A549 (cell line): ENCODE measurements at regions of chr7 and their contacts with region 1.

Region 1: GRCh38 chr7:80722616-80723141 is 84.2 kb downstream of the CD36 start:
- DNase-seq: peak; percentile 83 to 98
- ATAC-seq: peak; percentile 98 to 99
- H3K4me3 ChIP-seq: peak overlapping the region; percentile 3; the same call in 1 of the 3 replicates
- H3K27ac ChIP-seq: peak overlapping the region; percentile 96 to 98
- H3K4me1 ChIP-seq: peaks cover 53% of the 10 kb centered on the region
- CTCF ChIP-seq: no peak
- EP300 ChIP-seq: peak; percentile 97 to 99
- POLR2A ChIP-seq: no peak
- RAD21 ChIP-seq: peak; percentile 41 to 72

Region 2: DNA sequence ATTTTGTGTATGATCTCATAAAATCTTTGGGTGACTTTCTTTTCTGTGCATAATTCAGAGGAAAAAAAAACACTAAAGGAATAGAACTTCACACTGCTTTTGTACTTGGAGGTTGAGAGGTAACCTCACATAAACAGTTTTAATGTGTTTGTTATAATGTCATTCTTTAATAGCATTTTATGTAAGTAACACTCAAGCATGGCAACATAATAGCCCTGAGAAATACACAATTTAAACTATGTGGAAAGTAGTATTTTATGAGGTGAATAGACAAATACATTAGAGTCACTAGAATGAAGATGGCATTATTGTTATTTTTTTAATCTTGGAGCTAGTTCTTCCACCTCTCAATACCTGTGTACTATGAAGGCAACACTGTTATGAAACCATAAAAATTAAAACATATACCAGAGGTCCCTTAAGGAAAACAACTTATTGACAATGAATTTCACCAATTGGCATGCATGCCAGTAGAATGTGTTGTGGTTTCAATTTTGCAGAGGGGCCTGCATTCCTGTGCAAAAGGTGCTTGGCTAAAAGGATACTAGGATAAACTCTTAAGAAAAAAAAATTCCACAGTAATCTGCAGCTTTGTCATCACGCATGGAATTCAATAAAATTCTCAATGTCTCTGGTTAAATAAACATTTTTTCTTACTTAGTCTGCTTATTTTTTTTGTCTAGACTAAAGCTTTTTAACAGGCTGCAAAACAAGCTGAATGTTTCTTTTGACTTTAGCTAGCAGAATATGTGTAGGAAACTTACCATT is 18.3 kb after region 1 on chr7:
- CTCF ChIA-PET with region 1: interaction called, 3 read pairs
- POLR2A ChIA-PET with region 1: interaction called, 10 read pairs
- DNase-seq: peak in 1 of 2 experiments; percentile 37
- ATAC-seq: peak in 1 of 2 experiments; percentile 65; a peak in 3 of 6 replicates
- H3K4me3 ChIP-seq: no peak overlapping the region
- H3K27ac ChIP-seq: peak overlapping the region; percentile 69 to 78; a peak in 5 of 6 replicates
- H3K4me1 ChIP-seq: peaks cover 60% of the 10 kb centered on the region
- CTCF ChIP-seq: no peak
- EP300 ChIP-seq: peak in 1 of 2 experiments; percentile 40; a peak in 1 of 5 replicates
- POLR2A ChIP-seq: no peak
- RAD21 ChIP-seq: no peak; a peak in 2 of 5 replicates

Region 3: DNA sequence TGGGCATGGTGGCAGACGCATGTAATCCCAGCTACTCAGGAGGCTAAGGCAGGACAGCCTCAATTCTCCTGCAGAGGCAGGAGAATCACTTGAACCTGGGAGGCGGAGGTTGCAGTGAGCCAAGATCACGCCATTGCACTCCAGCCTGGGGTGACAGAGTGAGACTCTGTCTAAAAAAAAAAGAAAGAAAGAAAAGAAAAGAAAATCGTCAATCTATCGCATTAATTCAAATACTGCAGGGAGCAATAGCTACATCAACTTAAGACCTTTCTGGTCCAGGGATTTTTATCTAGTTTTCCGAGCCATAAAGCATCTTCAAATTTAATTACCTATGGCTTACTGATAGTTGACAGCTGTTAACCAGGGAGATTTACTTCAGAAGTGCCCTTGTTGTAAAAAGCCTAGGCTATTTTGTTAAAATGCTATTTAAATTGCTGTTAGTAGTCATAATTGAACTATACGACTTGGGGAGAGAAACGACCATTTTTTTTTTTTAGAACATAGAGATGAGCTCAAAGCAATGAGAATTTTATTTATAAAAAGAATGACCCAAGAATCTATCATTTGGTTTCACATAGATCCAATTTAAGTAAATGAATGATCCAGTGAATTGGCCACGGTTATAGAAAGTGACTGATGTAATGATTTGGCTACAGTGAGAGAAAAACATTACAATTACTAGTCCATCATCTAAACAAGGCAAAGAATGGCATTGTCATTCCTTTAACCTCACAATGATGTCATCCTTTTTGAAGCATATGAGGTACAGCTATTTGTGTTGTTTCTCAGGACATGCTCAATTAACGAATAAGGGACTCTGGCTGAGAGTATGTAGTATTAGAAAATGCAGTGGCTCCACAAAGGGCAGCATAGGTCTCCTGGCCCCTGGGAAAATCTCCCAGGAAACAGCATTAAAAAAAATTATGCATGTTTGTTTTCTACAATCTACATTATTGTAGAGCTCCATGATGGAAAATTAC is 110.9 kb after region 1 on chr7:
- CTCF ChIA-PET with region 1: no interaction called
- POLR2A ChIA-PET with region 1: no interaction called
- DNase-seq: peak in 1 of 2 experiments; percentile 35
- ATAC-seq: no peak
- H3K4me3 ChIP-seq: no peak overlapping the region
- H3K27ac ChIP-seq: peak overlapping the region; percentile 4 to 56; a peak in 3 of 6 replicates
- H3K4me1 ChIP-seq: peaks cover 85% of the 10 kb centered on the region
- CTCF ChIP-seq: no peak
- EP300 ChIP-seq: no peak
- POLR2A ChIP-seq: no peak
- RAD21 ChIP-seq: no peak